ENCODE measurements at regions of chr1 and their contacts with region 1.

Region 1: GRCh38 chr1:24481101-24481500 is 21.5 kb upstream of the RCAN3 start:
- DNase-seq: peak; percentile 44
- H3K4me3 Mint-ChIP-seq: peak overlapping the region; percentile 60
- H3K27ac Mint-ChIP-seq: peak overlapping the region; percentile 96
- H3K4me1 Mint-ChIP-seq: peaks cover 45% of the 10 kb centered on the region
- H3K27me3 Mint-ChIP-seq: no peaks in the 10 kb centered on the region

Region 2: DNA sequence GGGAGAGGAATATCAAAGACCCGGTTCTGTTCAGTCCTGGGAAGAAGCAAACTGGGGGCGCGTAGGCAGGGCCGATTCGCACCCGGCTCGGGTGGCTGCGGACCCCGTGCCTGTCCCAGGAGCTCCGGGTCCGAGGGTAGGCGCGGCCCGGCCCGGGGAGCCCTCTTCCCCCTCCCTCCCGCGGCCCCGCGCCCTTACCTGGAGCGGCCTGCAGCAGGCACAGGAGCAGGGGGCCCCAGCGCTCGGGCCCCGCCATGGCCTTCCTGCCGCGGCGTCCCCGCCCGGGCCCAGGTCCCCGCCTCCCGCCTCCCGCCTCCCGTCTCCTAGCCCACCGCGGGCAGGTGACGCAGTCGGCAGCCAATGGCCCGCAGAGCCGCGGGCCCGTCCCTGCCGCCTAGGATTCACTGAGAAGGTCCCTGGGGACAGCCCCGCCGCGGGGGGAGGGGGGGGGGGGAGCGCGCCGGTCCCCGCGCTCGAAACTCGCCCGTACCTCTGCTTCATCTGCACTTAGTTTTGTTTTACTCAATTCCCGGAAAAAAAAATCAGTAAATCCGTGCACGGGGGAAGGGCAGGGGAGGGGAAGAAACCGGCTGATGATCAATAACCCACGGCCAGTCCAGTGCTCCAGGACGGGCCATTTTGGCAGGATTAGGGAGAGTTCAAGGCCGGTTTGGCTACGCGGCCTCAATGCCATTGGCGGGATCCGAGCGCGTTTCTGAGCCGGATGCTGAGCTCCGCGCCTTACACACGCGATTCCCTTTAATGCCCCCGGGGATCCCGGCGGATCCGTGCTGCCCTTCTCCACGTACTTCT is 293.9 kb before region 1 on chr1 and contains the start of gene IFNLR1:
- intact Hi-C with region 1: loop called (anchors 5 kb)
- DNase-seq: peak; percentile 61
- H3K4me3 Mint-ChIP-seq: peak within 1 kb of the TSS; percentile 76
- H3K27ac Mint-ChIP-seq: peak within 1 kb of the TSS; percentile 23
- H3K4me1 Mint-ChIP-seq: peaks cover 40% of the 10 kb centered on the region
- H3K27me3 Mint-ChIP-seq: peaks cover 7% of the 10 kb centered on the region
- total RNA-seq, gene IFNLR1: 2.2 and 3.1 TPM in 2 replicates

Region 3: DNA sequence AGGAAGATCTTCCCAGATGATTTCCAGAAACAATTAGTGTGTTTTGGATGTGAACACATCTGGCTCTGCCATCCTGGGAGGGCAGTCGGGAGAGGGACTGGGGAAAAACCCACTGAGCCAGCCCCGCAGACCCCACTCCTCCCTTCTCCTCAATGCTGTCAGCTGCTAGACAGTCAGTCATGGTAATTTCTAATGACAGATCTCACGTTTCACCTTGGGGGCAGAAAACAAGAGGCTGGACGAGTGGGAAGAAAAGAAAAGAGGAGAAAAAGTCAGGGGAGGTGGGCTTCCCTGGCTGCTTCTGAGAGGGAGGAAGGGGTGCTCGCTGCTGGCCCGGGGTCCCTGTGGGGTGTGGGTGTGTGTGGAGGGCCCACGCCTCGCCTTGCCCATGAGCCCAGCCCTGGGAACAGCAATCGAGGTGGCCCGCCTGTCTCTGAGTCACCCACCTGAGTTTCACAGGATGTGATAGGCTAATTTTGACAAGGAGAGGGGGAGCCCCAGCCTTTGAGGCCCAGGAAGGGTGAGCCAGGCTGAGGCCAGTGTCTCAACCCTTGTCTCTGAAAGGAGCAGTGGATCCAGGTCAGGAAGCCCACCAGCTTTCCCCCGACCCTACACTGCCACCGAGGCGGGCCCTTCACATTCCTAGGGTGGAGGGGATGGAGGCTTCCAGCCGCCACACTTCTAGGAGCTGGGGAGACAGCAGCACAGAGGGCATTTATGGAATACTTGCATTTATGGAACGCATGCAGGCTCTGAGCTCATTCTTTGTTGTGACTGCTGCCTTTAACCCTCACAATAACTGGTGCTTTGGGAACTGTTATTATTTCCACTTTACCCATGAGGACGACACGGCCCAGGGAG is 244.9 kb before region 1 on chr1:
- intact Hi-C with region 1: no loop called
- DNase-seq: no peak
- H3K4me3 Mint-ChIP-seq: no peak overlapping the region
- H3K27ac Mint-ChIP-seq: no peak overlapping the region
- H3K4me1 Mint-ChIP-seq: peaks cover 4% of the 10 kb centered on the region
- H3K27me3 Mint-ChIP-seq: peaks cover 6% of the 10 kb centered on the region

Region 4: DNA sequence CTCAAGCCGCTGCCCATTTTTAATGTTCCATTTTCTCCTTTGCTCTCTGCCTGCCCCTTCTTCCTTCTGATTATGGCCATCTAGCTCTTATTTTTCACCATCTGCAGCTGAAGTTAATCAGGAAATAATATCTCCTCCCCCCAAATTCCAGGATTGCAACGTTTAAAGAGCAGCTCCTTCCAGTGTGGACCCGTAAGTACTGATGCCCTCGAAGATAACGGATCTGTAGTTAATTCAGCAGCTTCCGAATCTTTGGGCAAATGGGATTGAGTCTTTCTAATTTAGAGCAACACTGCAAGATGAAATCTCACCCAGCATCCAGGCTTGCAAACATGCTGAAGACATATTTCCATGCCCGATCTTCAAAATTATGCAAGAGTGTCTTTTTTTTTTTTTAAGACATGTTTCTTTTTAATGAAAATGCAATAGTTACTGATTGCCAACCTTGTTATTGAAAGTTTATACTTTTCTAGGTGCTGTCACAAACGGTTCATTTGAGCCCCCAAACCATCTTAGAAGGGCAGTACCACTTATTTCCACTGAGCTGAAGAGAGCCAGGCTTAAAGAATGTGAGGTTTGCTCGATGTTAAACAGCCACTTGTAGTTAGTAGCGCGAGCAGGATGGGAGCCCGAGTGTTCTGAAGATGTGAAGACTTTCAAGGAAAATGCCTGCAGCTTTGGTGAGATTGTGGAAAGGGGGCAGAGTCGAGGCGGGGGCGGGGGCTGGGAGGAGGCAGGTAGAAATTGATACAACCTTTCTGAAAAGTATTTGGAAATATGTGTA is 10.7 kb after region 1 on chr1:
- intact Hi-C with region 1: loop called (anchors 1 kb)
- DNase-seq: no peak
- H3K4me3 Mint-ChIP-seq: no peak overlapping the region
- H3K27ac Mint-ChIP-seq: no peak overlapping the region
- H3K4me1 Mint-ChIP-seq: peaks cover 21% of the 10 kb centered on the region
- H3K27me3 Mint-ChIP-seq: peaks cover 1% of the 10 kb centered on the region